ENCODE measurements at regions of chr9 and their contacts with region 1.

Region 1: GRCh38 chr9:272251-273213 is 57.9 kb downstream of the DOCK8 start:
- DNase-seq: peak; percentile 75
- H3K4me3 Mint-ChIP-seq: peak overlapping the region; percentile 83
- H3K27ac Mint-ChIP-seq: peak overlapping the region; percentile 94
- H3K4me1 Mint-ChIP-seq: peaks cover 60% of the 10 kb centered on the region
- H3K27me3 Mint-ChIP-seq: no peaks in the 10 kb centered on the region

Region 2: GRCh38 chr9:214648-215493 is 57.7 kb before region 1 on chr9 and contains the start of gene DOCK8:
- intact Hi-C with region 1: loop called (anchors 1 kb)
- DNase-seq: peak; percentile 58
- H3K4me3 Mint-ChIP-seq: peak within 1 kb of the TSS; percentile 83
- H3K27ac Mint-ChIP-seq: peak within 1 kb of the TSS; percentile 85
- H3K4me1 Mint-ChIP-seq: peaks cover 24% of the 10 kb centered on the region
- H3K27me3 Mint-ChIP-seq: no peaks in the 10 kb centered on the region
- total RNA-seq, gene DOCK8: 120 and 122 TPM in 2 replicates

Region 3: GRCh38 chr9:249025-249424 is 23.5 kb before region 1 on chr9:
- intact Hi-C with region 1: loop called (anchors 1 kb)
- DNase-seq: no peak
- H3K4me3 Mint-ChIP-seq: no peak overlapping the region
- H3K27ac Mint-ChIP-seq: peak overlapping the region; percentile 80
- H3K4me1 Mint-ChIP-seq: peaks cover 25% of the 10 kb centered on the region
- H3K27me3 Mint-ChIP-seq: peaks cover 2% of the 10 kb centered on the region

Region 4: GRCh38 chr9:306887-307286 is 34.4 kb after region 1 on chr9:
- intact Hi-C with region 1: loop called (anchors 5 kb)
- DNase-seq: peak; percentile 20
- H3K4me3 Mint-ChIP-seq: no peak overlapping the region
- H3K27ac Mint-ChIP-seq: no peak overlapping the region
- H3K4me1 Mint-ChIP-seq: no peaks in the 10 kb centered on the region
- H3K27me3 Mint-ChIP-seq: no peaks in the 10 kb centered on the region

Region 5: DNA sequence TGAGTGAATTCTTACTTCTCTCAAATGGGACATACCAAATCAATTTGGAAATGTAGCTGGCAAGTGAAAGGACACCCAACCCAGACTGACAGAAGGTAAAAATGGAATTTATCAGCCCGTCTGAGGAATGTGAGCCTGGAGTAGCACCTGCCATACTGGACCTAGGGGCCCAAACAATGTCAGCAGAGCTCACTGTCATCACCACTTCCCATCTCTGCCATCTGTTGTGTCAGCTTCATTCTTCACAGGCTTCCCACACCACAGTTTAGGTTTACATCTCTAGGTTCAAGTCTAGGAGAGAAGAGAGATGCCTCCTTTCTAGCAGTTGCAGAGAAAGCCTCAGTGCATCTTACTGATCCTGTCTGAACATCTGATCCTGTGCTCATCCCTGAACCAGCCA is 164.5 kb after region 1 on chr9:
- intact Hi-C with region 1: no loop called
- DNase-seq: no peak
- H3K4me3 Mint-ChIP-seq: no peak overlapping the region
- H3K27ac Mint-ChIP-seq: no peak overlapping the region
- H3K4me1 Mint-ChIP-seq: no peaks in the 10 kb centered on the region
- H3K27me3 Mint-ChIP-seq: no peaks in the 10 kb centered on the region

Region 6: GRCh38 chr9:447230-448025 is 174.9 kb after region 1 on chr9:
- intact Hi-C with region 1: loop called (anchors 1 kb)
- DNase-seq: peak; percentile 74
- H3K4me3 Mint-ChIP-seq: peak overlapping the region; percentile 53
- H3K27ac Mint-ChIP-seq: peak overlapping the region; percentile 76
- H3K4me1 Mint-ChIP-seq: peaks cover 50% of the 10 kb centered on the region
- H3K27me3 Mint-ChIP-seq: no peaks in the 10 kb centered on the region

Region 7: GRCh38 chr9:469672-470551 is 197.4 kb after region 1 on chr9:
- intact Hi-C with region 1: loop called (anchors 1 kb)
- DNase-seq: peak; percentile 88
- H3K4me3 Mint-ChIP-seq: peak overlapping the region; percentile 97
- H3K27ac Mint-ChIP-seq: peak overlapping the region; percentile 98
- H3K4me1 Mint-ChIP-seq: peaks cover 36% of the 10 kb centered on the region
- H3K27me3 Mint-ChIP-seq: peaks cover 1% of the 10 kb centered on the region